ENCODE measurements at regions of chr2 and their contacts with region 1.

Region 1: GRCh38 chr2:47334356-47335136 is 68.4 kb upstream of the MSH2 start:
- DNase-seq: peak; percentile 52
- H3K4me3 ChIP-seq: no peak overlapping the region
- H3K27ac ChIP-seq: no peak overlapping the region
- H3K4me1 ChIP-seq: no peaks in the 10 kb centered on the region
- H3K27me3 ChIP-seq: no peaks in the 10 kb centered on the region
- CTCF ChIP-seq: no peak
- POLR2A ChIP-seq: no peak

Region 2: GRCh38 chr2:47344890-47345589 is 10.5 kb after region 1 on chr2:
- CTCF ChIA-PET with region 1: interaction called, 58 read pairs
- POLR2A ChIA-PET with region 1: interaction called, 7 read pairs
- dilution Hi-C with region 1: no loop called
- intact Hi-C with region 1: no loop called
- DNase-seq: peak; percentile 93
- H3K4me3 ChIP-seq: peak overlapping the region; percentile 43 to 70 (median 63)
- H3K27ac ChIP-seq: peak overlapping the region; percentile 84
- H3K4me1 ChIP-seq: peaks cover 15% of the 10 kb centered on the region
- H3K27me3 ChIP-seq: no peaks in the 10 kb centered on the region
- CTCF ChIP-seq: peak in 1 of 2 donors; percentile 16
- POLR2A ChIP-seq: peak; percentile 91

Measured in endothelial cell of umbilical vein (primary cell).